ENCODE measurements at regions of chr4 and their contacts with region 1.

Region 1: GRCh38 chr4:77095101-77095821 is 19.5 kb upstream of the CCNI start:
- DNase-seq: peak; percentile 66
- H3K4me3 Mint-ChIP-seq: peak overlapping the region; percentile 7
- H3K27ac Mint-ChIP-seq: peak overlapping the region; percentile 20
- H3K4me1 Mint-ChIP-seq: peaks cover 23% of the 10 kb centered on the region
- H3K27me3 Mint-ChIP-seq: no peaks in the 10 kb centered on the region
- CTCF ChIP-seq: peak; percentile 55

Region 2: GRCh38 chr4:76585897-76586360 is 509.3 kb before region 1 on chr4:
- CTCF ChIA-PET with region 1: no interaction called
- intact Hi-C with region 1: no loop called
- DNase-seq: peak; percentile 89
- H3K4me3 Mint-ChIP-seq: peak overlapping the region; percentile 77
- H3K27ac Mint-ChIP-seq: peak overlapping the region; percentile 50
- H3K4me1 Mint-ChIP-seq: peaks cover 37% of the 10 kb centered on the region
- H3K27me3 Mint-ChIP-seq: no peaks in the 10 kb centered on the region
- CTCF ChIP-seq: no peak

Region 3: GRCh38 chr4:77146186-77147078 is 51.2 kb after region 1 on chr4:
- CTCF ChIA-PET with region 1: no interaction called
- intact Hi-C with region 1: loop called (anchors 5 kb)
- DNase-seq: no peak
- H3K4me3 Mint-ChIP-seq: no peak overlapping the region
- H3K27ac Mint-ChIP-seq: no peak overlapping the region
- H3K4me1 Mint-ChIP-seq: peaks cover 8% of the 10 kb centered on the region
- H3K27me3 Mint-ChIP-seq: no peaks in the 10 kb centered on the region
- CTCF ChIP-seq: no peak